Activated T-helper 1 cell treated with anti-CD3 and anti-CD28 coated beads, Interleukin-12 subunit alpha, Interleukin-12 subunit beta, Interleukin-2, Interleukin-4 antibody, amounts not matched to agents 30 ng/mL and 10 ng/mL and 1 ng/mL, durations not matched to agents 14 hours and 24 hours and 36 hours (primary cell): ENCODE measurements at regions of chr15 and their contacts with region 1.

Region 1: DNA sequence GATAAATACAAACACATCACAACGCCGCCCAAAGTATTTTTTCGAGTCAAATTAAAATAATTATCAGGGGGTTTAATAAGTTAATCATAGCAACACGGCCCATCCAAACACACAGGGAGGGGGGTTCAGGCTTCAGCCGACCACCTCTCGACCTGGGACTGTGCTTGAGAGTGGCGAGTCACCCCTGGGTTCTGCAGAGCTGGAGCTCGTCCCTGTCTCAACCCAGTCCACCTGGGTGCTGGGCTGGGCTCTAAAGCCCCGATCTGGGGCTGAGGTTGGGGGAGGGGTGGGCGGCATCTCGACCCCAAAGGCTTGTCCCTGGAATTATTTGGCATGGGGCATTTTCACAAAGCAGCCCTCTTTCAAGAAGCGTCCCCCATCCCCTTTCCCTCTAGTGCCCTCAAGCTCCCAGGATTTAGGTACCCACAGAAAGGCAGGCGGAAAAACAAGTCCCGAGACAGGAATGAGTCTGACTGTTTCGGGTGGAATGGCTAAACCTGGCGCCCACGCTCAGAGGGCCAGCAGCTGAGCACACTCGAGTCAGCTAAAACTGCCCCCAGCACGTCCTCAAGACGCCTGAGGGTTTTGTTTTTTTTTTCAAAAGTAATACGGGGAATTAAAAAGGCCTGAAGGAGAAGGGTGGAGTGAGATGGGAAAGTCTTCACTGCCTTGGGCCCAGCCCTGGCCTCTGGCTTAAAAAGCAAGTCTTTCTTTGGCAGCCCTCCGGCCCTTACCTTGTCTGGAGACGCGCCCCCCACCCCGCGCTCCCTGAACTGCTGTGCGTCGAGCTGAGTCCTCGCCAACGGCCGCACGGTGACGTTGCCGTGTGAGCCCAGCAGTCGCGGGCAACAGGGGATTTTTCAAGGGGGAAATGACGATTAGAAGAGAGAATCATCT is 32.5 kb downstream of the NR2F2 start:
- DNase-seq: no peak
- H3K4me3 Mint-ChIP-seq: no peak overlapping the region
- H3K27ac Mint-ChIP-seq: peak overlapping the region; percentile 45
- H3K4me1 Mint-ChIP-seq: no peaks in the 10 kb centered on the region
- H3K27me3 Mint-ChIP-seq: peaks cover 69% of the 10 kb centered on the region

Region 2: GRCh38 chr15:96409215-96410138 is 46.5 kb after region 1 on chr15:
- intact Hi-C with region 1: loop called (anchors 2 kb)
- DNase-seq: no peak
- H3K4me3 Mint-ChIP-seq: no peak overlapping the region
- H3K27ac Mint-ChIP-seq: peak overlapping the region; percentile 43
- H3K4me1 Mint-ChIP-seq: peaks cover 6% of the 10 kb centered on the region
- H3K27me3 Mint-ChIP-seq: peaks cover 65% of the 10 kb centered on the region